Activated CD4-positive, alpha-beta T cell treated with anti-CD3 and anti-CD28 coated beads, Interleukin-2, amount 10 ng/mL, durations not matched to agents 24 days and 14 days (primary cell): ENCODE measurements at regions of chr11 and their contacts with region 1.

Region 1: GRCh38 chr11:43579171-43579918 is 101.2 kb upstream of the HSD17B12 start:
- DNase-seq: peak; percentile 63
- H3K4me3 Mint-ChIP-seq: peak overlapping the region; percentile 73
- H3K27ac Mint-ChIP-seq: no peak overlapping the region
- H3K4me1 Mint-ChIP-seq: peaks cover 21% of the 10 kb centered on the region
- H3K27me3 Mint-ChIP-seq: peaks cover 88% of the 10 kb centered on the region

Region 2: DNA sequence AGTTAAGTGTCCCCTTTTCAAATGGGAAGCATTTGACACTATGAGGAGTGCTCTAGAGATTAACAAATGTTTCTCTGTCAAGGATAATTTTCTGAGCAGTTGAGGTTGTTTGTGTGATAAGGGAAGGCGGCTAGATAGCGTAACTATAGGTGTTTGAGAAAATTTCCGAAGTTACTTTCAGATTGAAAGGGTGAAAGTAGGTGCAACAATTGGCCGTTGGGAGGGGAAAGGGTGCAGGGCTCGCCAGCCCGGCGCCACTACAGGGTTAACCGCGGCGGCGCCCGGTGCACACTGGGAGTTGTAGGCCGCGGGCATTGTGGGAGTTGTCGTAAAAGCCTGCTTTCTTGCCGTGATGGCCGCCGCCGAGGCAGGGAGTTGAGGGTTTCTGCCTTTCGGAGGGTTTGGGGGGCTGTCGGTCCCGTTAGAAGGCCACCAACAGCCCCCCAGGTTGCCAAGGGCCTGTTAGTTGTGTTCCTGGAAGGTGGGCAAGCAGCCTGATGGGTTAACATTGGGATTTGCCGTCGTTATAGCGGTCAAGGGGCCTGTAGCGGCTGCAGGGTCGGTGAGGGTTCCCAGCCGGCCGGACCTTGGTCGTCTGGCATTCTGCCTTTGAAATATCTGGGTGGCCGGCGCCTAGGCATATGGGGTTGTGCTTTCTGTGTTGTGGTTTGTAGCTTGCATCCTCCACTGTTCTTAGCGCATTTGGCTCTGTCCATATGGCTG is 64.7 kb after region 1 on chr11:
- intact Hi-C with region 1: loop called (anchors 5 kb)
- DNase-seq: peak; percentile 96
- H3K4me3 Mint-ChIP-seq: peak overlapping the region; percentile 94
- H3K27ac Mint-ChIP-seq: peak overlapping the region; percentile 87
- H3K4me1 Mint-ChIP-seq: peaks cover 11% of the 10 kb centered on the region
- H3K27me3 Mint-ChIP-seq: peaks cover 15% of the 10 kb centered on the region

Region 3: GRCh38 chr11:43852057-43852636 is 272.8 kb after region 1 on chr11:
- intact Hi-C with region 1: loop called (anchors 5 kb)
- DNase-seq: peak; percentile 89
- H3K4me3 Mint-ChIP-seq: no peak overlapping the region
- H3K27ac Mint-ChIP-seq: no peak overlapping the region
- H3K4me1 Mint-ChIP-seq: peaks cover 2% of the 10 kb centered on the region
- H3K27me3 Mint-ChIP-seq: no peaks in the 10 kb centered on the region

Region 4: GRCh38 chr11:43944761-43945311 is 365.5 kb after region 1 on chr11:
- intact Hi-C with region 1: loop called (anchors 5 kb)
- DNase-seq: peak; percentile 93
- H3K4me3 Mint-ChIP-seq: peak overlapping the region; percentile 87
- H3K27ac Mint-ChIP-seq: peak overlapping the region; percentile 28
- H3K4me1 Mint-ChIP-seq: peaks cover 18% of the 10 kb centered on the region
- H3K27me3 Mint-ChIP-seq: peaks cover 62% of the 10 kb centered on the region

Region 5: GRCh38 chr11:44309483-44310205 is 730.3 kb after region 1 on chr11 and contains the start of gene ALX4:
- intact Hi-C with region 1: loop called (anchors 5 kb)
- DNase-seq: peak; percentile 77
- H3K4me3 Mint-ChIP-seq: peak within 1 kb of the TSS; percentile 50
- H3K27ac Mint-ChIP-seq: peak within 1 kb of the TSS; percentile 41
- H3K4me1 Mint-ChIP-seq: peaks cover 28% of the 10 kb centered on the region
- H3K27me3 Mint-ChIP-seq: peaks cover 93% of the 10 kb centered on the region
- total RNA-seq, gene ALX4: not detected in 2 replicates